PC-9 (cell line): ENCODE measurements at regions of chr3 and their contacts with region 1.

Region 1: GRCh38 chr3:194134757-194135528 is 1.0 kb upstream of the HES1 start:
- DNase-seq: peak; percentile 96 to 100
- H3K4me3 ChIP-seq: peak overlapping the region; percentile 55
- H3K27ac ChIP-seq: peak overlapping the region; percentile 88
- H3K4me1 ChIP-seq: peaks cover 60% of the 10 kb centered on the region
- H3K27me3 ChIP-seq: no peaks in the 10 kb centered on the region
- CTCF ChIP-seq: no peak

Region 2: GRCh38 chr3:193605876-193606275 is 529.1 kb before region 1 on chr3:
- CTCF ChIA-PET with region 1: no interaction called
- POLR2A ChIA-PET with region 1: interaction called, 26 read pairs
- intact Hi-C with region 1: loop called (anchors 5 kb)
- DNase-seq: peak; percentile 46 to 58
- H3K4me3 ChIP-seq: no peak overlapping the region
- H3K27ac ChIP-seq: no peak overlapping the region
- H3K4me1 ChIP-seq: no peaks in the 10 kb centered on the region
- H3K27me3 ChIP-seq: no peaks in the 10 kb centered on the region
- CTCF ChIP-seq: peak; percentile 96

Region 3: GRCh38 chr3:193816590-193817311 is 318.2 kb before region 1 on chr3:
- CTCF ChIA-PET with region 1: interaction called, 4 read pairs
- POLR2A ChIA-PET with region 1: interaction called, 15 read pairs
- intact Hi-C with region 1: no loop called
- DNase-seq: peak; percentile 94 to 97
- H3K4me3 ChIP-seq: no peak overlapping the region; the same call in 1 of the 2 replicates
- H3K27ac ChIP-seq: peak overlapping the region; percentile 47
- H3K4me1 ChIP-seq: peaks cover 67% of the 10 kb centered on the region
- H3K27me3 ChIP-seq: no peaks in the 10 kb centered on the region
- CTCF ChIP-seq: no peak

Region 4: DNA sequence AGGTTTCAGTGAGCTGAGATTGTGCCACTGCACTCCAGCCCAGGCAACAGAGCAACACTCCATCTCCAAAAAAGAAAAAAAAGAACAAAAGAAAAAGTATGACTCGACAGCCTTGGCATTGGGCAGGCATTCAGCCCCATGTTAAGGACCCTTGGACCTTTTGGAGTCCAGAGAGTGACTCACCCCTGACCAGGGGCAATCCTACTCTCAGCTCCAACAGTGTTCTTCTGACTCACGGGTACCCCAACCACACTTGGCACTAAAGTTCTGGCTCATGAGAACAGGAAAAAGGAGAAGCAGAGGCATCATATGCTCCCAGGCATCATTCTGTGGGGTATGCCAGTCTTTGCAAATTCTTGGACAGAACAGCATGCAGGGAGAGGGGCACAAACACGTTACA is 251.4 kb before region 1 on chr3:
- CTCF ChIA-PET with region 1: interaction called, 6 read pairs
- POLR2A ChIA-PET with region 1: interaction called, 5 read pairs
- intact Hi-C with region 1: loop called (anchors 1 kb)
- DNase-seq: peak; percentile 58 to 85
- H3K4me3 ChIP-seq: no peak overlapping the region
- H3K27ac ChIP-seq: peak overlapping the region; percentile 81
- H3K4me1 ChIP-seq: peaks cover 88% of the 10 kb centered on the region
- H3K27me3 ChIP-seq: no peaks in the 10 kb centered on the region
- CTCF ChIP-seq: no peak

Region 5: GRCh38 chr3:193982258-193982659 is 152.7 kb before region 1 on chr3:
- CTCF ChIA-PET with region 1: no interaction called
- POLR2A ChIA-PET with region 1: interaction called, 18 read pairs
- intact Hi-C with region 1: loop called (anchors 1 kb)
- DNase-seq: peak in 1 of 2 experiments; percentile 97
- H3K4me3 ChIP-seq: no peak overlapping the region
- H3K27ac ChIP-seq: no peak overlapping the region
- H3K4me1 ChIP-seq: 0 out of 2 replicates have a peak, but pooled peaks cover 6% of the 10 kb centered on the region
- H3K27me3 ChIP-seq: no peaks in the 10 kb centered on the region
- CTCF ChIP-seq: no peak

Region 6: DNA sequence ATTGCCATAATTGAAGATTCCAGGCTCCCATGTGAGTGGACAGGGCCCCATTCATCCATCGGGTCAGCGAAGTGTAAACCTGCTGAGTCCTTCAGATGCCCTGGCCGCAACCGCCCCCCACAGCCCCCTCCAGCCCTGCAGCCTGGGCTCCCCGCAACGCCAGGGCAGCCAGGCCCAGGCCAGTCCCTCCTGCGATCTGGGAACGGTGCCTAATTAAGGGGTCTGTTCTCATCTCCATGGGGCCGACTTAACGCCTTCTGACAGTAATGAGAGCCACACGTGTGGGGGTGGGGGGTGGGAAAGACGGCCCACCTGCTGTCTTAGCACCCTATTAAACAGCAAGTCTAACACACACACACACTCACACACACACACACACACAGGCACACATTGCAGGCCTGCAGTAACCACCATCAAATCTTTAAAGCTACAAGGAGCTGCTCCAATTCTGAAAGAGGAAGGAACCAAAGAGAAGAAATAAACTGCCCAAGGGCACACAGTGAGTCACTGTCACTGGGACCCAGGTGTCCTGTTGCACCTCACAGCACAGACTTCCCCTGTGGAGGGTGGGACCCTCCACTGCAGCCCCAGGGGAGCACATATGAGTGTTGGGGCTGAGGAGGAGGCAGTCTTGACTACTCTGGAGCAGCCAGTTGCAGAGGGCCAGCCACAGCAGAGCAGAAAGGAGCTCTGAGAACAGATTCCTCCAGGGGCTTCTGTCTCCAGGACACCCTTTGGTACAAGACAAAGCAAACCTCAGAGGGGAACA is 30.8 kb before region 1 on chr3:
- CTCF ChIA-PET with region 1: interaction called, 18 read pairs
- POLR2A ChIA-PET with region 1: interaction called, 3 read pairs
- intact Hi-C with region 1: no loop called
- DNase-seq: peak; percentile 42 to 72
- H3K4me3 ChIP-seq: no peak overlapping the region
- H3K27ac ChIP-seq: no peak overlapping the region
- H3K4me1 ChIP-seq: peaks cover 18% of the 10 kb centered on the region
- H3K27me3 ChIP-seq: no peaks in the 10 kb centered on the region
- CTCF ChIP-seq: no peak

Region 7: GRCh38 chr3:194323785-194324735 is 189.1 kb after region 1 on chr3:
- CTCF ChIA-PET with region 1: no interaction called
- POLR2A ChIA-PET with region 1: interaction called, 11 read pairs
- intact Hi-C with region 1: no loop called
- DNase-seq: peak; percentile 60 to 72
- H3K4me3 ChIP-seq: no peak overlapping the region
- H3K27ac ChIP-seq: peak overlapping the region; percentile 98
- H3K4me1 ChIP-seq: peaks cover 39% of the 10 kb centered on the region
- H3K27me3 ChIP-seq: no peaks in the 10 kb centered on the region
- CTCF ChIP-seq: no peak